Motor neuron (in vitro differentiated cells): ENCODE measurements at regions of chr11 and their contacts with region 1.

Region 1: GRCh38 chr11:568306-569157 is 7.7 kb upstream of the PHRF1 start:
- ATAC-seq: peak; percentile 90 to 94 (median 92)
- H3K4me3 ChIP-seq: peak overlapping the region; percentile 49 to 74 (median 68)
- H3K27ac ChIP-seq: peak overlapping the region; percentile 80 to 90
- H3K4me1 ChIP-seq: peaks cover 12 to 26% of the 10 kb centered on the region in 2 donors

Region 2: DNA sequence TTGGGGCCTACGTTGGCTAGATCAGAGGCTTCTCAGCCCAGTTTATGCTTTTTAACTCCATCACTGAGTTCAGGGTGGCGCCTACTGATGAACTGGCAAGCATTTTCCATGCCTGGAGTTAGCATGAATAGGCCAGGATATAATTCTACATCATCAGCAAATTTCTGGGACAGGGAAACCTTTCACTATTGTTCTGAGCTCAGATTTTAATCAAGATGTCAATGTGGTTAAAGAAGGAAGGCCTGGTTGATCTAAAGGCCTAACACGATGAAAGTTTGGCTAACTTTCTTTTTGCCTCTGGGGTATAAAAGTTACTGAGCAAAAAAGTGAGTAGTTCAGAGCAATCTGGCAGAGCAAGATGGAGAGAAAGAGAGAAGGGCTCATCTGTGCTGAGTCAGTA is 226.2 kb before region 1 on chr11:
- in situ Hi-C with region 1: no loop called
- ATAC-seq: peak in 2 of 8 experiments; percentile 16 to 26
- H3K4me3 ChIP-seq: no peak overlapping the region
- H3K27ac ChIP-seq: no peak overlapping the region
- H3K4me1 ChIP-seq: peaks cover 0 to 3% of the 10 kb centered on the region in 2 donors

Region 3: DNA sequence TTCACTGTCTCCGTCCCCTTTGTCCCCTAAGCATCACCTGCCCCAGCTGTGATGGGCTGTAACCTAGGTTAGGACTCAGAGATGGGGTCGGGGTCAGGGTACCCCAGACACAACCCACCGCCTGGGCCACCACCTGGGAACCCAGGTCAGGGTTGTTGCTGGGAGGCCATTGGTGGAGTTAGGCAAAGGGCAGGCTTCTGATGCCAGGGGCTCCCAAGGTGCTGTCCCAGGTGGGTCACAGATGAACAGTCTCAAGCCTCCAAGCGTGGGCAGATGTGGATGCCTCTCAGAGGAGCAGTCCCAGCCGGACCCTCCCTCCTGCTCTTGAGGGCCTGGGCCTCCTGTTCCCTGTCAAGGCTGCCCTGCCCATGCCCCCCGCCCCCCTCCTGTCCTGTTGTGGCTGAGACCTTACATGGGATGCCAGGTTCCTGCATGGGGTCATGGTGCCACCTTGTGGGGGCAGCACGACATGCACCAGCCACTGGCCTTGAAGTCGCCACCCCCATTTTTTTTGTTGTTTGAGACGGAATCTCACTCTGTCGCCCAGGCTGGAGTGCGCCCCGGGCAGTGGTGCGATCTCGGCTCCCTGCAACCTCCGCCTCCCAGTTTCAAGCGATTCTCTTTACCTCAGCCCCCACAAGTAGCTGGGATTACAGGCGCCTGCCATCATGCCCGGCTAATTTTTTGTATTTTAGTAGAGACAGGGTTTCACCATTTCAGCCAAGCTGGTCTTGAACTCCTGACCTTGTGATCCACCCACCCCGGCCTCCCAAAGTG is 196.7 kb after region 1 on chr11:
- in situ Hi-C with region 1: loop called in 1 of 9 experiments (anchors 25 kb)
- ATAC-seq: peak; percentile 8 to 68 (median 52)
- H3K4me3 ChIP-seq: no peak overlapping the region
- H3K27ac ChIP-seq: no peak overlapping the region
- H3K4me1 ChIP-seq: no peaks in the 10 kb centered on the region